Cardiac septum (tissue), 1 donor: ENCODE measurements at regions of chr6 and their contacts with region 1.

Region 1: DNA sequence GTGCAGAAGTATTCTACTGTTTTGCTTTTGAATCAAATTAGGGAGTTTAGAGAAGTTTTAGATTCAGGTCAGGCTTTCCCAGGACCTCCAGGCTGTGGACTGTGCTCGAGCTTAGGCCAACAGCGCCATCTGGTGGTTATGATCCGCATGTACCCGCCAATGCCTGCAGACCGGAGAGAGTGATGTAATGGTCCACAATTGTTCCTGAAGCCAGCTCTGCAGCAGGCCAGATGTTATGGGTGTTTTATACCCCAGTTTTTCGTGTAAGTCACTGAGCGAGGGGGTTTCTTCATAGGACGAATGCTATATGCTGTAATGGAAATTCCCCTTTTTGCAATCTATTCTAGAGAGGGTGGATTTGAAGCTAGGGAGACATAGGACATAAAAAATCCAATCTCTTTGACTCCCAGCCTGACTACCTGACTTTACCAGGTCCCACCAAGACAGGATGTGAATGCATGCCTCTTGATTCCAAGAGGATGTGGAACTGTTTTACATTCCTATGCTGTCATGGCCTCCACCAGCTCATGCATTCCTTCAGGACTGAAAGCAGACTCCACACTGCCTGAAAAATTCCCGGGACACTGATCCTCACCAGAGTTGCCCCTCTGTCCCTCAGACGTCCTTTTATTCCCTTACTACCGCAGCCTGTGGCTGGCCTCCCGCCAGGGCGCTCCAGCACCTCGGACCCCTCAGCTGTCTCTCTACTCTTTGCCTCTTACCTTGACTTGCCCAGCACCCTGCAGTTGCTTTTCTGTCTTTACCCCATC is 41.2 kb upstream of the LY86 start:
- DNase-seq: peak; percentile 94

Region 2: GRCh38 chr6:5471044-5471443 is 1076.3 kb before region 1 on chr6:
- intact Hi-C with region 1: loop called (anchors 5 kb)
- DNase-seq: no peak

Region 3: GRCh38 chr6:6057424-6058053 is 489.8 kb before region 1 on chr6:
- intact Hi-C with region 1: loop called (anchors 2 kb)
- DNase-seq: no peak